Left colon (tissue), 2 donors: ENCODE measurements at regions of chr17 and their contacts with region 1.

Region 1: GRCh38 chr17:82917691-82918345 is 78.0 kb upstream of the ZNF750 start:
- DNase-seq: no peak
- ATAC-seq: no peak

Region 2: GRCh38 chr17:82507631-82508175 is 410.1 kb before region 1 on chr17:
- intact Hi-C with region 1: no loop called
- DNase-seq: no peak
- ATAC-seq: no peak

Region 3: DNA sequence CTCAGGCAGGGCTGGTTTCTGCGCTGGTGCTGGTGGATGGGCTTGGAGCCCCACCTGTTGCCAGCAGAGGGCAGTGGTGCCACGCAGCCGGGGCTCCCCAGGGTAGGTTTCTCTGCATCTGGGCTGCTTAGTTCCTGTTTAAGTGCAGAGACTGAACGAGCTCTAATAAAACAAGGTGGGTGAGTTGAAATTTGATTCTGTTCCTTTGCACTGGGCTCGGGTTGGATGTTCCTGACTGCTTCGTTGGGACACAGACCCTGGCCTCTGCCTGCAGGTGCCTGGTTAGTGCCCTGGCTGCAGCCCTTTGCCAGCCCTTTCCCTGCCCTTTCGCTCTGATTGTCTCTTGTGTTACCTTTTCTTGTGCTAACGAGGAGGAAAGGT is 135.9 kb before region 1 on chr17:
- intact Hi-C with region 1: loop called in 1 of 2 experiments (anchors 5 kb)
- DNase-seq: peak; percentile 65 to 88
- ATAC-seq: peak; percentile 99

Region 4: DNA sequence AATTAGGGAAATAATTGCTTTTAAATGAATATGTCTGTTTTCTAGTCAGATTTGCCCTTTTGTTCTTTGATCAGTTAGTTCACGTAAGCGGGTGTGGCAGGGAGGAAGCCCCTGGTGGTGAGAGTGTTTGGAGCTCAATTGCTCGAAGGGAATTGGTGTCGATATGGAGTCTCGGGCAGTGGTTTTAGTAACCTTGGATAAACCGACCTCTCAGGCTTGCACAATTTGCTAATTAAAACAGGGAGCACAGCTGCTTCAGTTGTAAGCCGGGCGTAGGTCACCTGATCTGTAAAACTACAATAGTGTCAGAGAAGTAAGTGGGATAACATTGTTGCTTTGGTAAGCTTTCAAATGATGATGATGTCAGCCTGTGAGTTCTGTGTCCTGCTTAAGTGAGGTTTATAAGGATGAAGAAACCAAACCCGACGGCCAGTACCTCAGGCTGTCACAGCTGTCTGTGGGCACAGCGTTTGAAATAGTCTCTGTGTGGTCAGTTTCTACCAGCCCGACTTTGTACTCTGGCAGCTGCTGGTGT is 80.9 kb before region 1 on chr17:
- intact Hi-C with region 1: no loop called
- DNase-seq: peak in 1 of 2 donors; percentile 21
- ATAC-seq: peak; percentile 36